Activated CD4-positive, alpha-beta T cell treated with anti-CD3 and anti-CD28 coated beads for 36 hours (primary cell): ENCODE measurements at regions of chr9 and their contacts with region 1.

Region 1: GRCh38 chr9:133023117-133023890 is 7.5 kb upstream of the GTF3C5 start:
- DNase-seq: peak; percentile 87
- ATAC-seq: peak; percentile 70
- H3K4me3 Mint-ChIP-seq: peak overlapping the region; percentile 49
- H3K27ac Mint-ChIP-seq: peak overlapping the region; percentile 74
- H3K4me1 Mint-ChIP-seq: peaks cover 18% of the 10 kb centered on the region
- H3K27me3 Mint-ChIP-seq: no peaks in the 10 kb centered on the region

Region 2: GRCh38 chr9:132235946-132236661 is 787.2 kb before region 1 on chr9:
- CTCF ChIA-PET with region 1: no interaction called
- POLR2A ChIA-PET with region 1: no interaction called
- intact Hi-C with region 1: no loop called
- DNase-seq: peak; percentile 91
- ATAC-seq: no peak
- H3K4me3 Mint-ChIP-seq: no peak overlapping the region
- H3K27ac Mint-ChIP-seq: no peak overlapping the region
- H3K4me1 Mint-ChIP-seq: peaks cover 3% of the 10 kb centered on the region
- H3K27me3 Mint-ChIP-seq: no peaks in the 10 kb centered on the region

Region 3: GRCh38 chr9:132301521-132301920 is 721.8 kb before region 1 on chr9:
- CTCF ChIA-PET with region 1: no interaction called
- POLR2A ChIA-PET with region 1: no interaction called
- intact Hi-C with region 1: no loop called
- DNase-seq: no peak
- ATAC-seq: no peak
- H3K4me3 Mint-ChIP-seq: no peak overlapping the region
- H3K27ac Mint-ChIP-seq: no peak overlapping the region
- H3K4me1 Mint-ChIP-seq: peaks cover 22% of the 10 kb centered on the region
- H3K27me3 Mint-ChIP-seq: no peaks in the 10 kb centered on the region

Region 4: DNA sequence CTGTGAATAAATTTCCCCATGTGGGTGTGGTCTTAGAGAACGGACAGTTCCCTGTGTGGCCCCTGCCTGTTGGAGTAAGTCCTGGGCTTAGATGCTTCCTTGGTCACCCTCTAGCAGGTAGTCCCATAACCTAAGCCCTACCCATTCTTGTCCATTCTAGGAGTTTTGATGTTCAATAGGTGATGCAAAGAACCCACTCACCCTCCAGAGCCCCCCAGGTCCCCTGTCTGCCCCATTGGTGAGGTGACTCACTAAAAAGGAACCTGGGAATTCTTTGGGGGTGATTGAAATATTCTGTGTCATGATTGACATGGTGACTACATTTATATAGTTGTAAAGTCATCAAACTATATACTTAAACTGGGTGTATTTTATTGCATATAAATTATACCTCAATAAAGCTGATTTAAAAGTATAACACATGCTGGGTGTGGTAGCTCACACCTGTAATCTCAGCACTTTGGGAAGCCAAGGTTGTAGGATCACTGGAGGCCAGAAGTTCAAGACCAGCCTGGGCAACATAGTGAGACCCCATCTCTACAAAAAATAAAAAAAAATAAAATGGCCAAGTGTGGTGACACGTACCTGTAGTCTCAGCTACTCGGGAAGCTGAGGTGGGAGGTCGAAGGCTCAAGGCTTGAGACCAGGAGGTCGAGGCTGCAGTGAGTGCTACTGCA is 13.3 kb before region 1 on chr9:
- CTCF ChIA-PET with region 1: interaction called, 28 read pairs
- POLR2A ChIA-PET with region 1: no interaction called
- intact Hi-C with region 1: no loop called
- DNase-seq: no peak
- ATAC-seq: no peak
- H3K4me3 Mint-ChIP-seq: no peak overlapping the region
- H3K27ac Mint-ChIP-seq: no peak overlapping the region
- H3K4me1 Mint-ChIP-seq: no peaks in the 10 kb centered on the region
- H3K27me3 Mint-ChIP-seq: peaks cover 16% of the 10 kb centered on the region

Region 5: DNA sequence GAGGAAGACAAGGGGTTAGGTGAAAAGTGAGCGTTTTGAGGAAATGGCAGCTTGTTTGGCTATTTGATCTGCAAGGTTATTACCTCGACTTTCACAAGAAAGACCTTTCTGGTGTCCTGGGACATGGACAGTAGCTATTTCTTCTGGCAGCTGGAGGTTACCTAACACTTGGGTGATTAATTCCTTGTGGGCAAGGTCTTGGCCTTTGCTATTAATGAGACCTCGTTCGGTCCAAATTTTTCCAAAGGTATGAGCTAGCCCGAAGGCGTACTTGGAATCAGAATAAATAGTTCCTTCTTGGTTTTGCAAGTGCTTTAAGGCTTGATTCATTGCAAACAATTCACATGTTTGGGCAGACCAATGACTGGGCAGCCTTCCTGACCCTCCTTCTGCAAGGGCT is 12.4 kb after region 1 on chr9:
- CTCF ChIA-PET with region 1: interaction called, 57 read pairs
- POLR2A ChIA-PET with region 1: interaction called, 9 read pairs
- intact Hi-C with region 1: loop called in 1 of 2 experiments (anchors 1 kb)
- DNase-seq: no peak
- ATAC-seq: no peak
- H3K4me3 Mint-ChIP-seq: no peak overlapping the region
- H3K27ac Mint-ChIP-seq: no peak overlapping the region
- H3K4me1 Mint-ChIP-seq: peaks cover 40% of the 10 kb centered on the region
- H3K27me3 Mint-ChIP-seq: no peaks in the 10 kb centered on the region

Region 6: DNA sequence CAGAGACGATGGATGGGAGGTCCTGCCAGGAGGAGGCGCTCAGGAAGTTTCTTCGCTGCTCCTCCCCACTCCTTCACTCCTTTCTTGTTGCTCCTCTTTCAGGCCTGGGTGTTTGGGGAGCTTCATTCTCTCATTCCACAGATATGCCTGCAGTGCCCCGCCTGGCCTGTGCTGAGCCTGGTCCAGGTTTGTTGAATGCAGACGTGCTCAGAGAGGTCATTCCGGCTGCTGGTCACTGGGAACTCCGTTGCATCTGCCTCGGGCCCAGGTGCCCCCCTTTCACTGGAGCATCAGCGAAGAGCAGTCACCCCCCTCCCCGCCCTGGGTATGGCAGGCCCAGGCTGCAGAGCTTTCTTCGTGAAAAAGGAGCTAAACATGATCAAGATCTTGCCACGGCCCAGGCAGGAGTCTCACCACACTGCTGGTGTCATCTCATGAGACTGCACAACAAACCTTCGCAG is 297.1 kb after region 1 on chr9:
- CTCF ChIA-PET with region 1: no interaction called
- POLR2A ChIA-PET with region 1: no interaction called
- intact Hi-C with region 1: no loop called
- DNase-seq: no peak
- ATAC-seq: no peak
- H3K4me3 Mint-ChIP-seq: no peak overlapping the region
- H3K27ac Mint-ChIP-seq: no peak overlapping the region
- H3K4me1 Mint-ChIP-seq: no peaks in the 10 kb centered on the region
- H3K27me3 Mint-ChIP-seq: no peaks in the 10 kb centered on the region